ENCODE measurements at regions of chr9 and their contacts with region 1.

Region 1: GRCh38 chr9:73125651-73126050 is 26.0 kb upstream of the ANXA1 start:
- DNase-seq: no peak
- ATAC-seq: no peak
- H3K4me3 ChIP-seq: no peak overlapping the region
- H3K4me3 Mint-ChIP-seq: no peak overlapping the region
- H3K27ac ChIP-seq: no peak overlapping the region
- H3K27ac Mint-ChIP-seq: no peak overlapping the region
- H3K4me1 ChIP-seq: no peaks in the 10 kb centered on the region
- H3K4me1 Mint-ChIP-seq: peaks cover 24% of the 10 kb centered on the region
- H3K27me3 ChIP-seq: no peaks in the 10 kb centered on the region
- H3K27me3 Mint-ChIP-seq: no peaks in the 10 kb centered on the region
- CTCF ChIP-seq: no peak

Region 2: DNA sequence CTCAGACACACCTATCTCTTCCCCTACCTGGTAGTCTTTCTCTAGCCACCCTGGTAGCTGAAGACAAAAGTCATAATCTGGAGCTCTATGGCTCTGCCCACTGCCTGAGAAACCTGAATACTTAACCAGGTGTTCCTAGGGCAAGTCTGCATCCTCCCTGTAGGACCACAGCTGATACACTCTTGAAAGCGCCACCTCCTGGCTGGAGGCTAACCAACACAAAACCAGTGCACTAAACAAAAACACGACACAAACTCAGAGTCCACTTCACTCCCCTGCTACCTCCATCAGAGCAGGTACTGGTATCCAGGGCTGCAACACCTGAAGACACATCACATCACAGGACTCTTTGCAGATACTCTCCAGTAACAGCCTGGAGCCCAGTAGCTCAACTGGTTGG is 58.6 kb before region 1 on chr9:
- CTCF ChIA-PET with region 1: no interaction called
- POLR2A ChIA-PET with region 1: no interaction called
- intact Hi-C with region 1: loop called in 1 of 2 experiments (anchors 10 kb)
- DNase-seq: no peak
- ATAC-seq: no peak
- H3K4me3 ChIP-seq: no peak overlapping the region
- H3K4me3 Mint-ChIP-seq: no peak overlapping the region
- H3K27ac ChIP-seq: no peak overlapping the region
- H3K27ac Mint-ChIP-seq: no peak overlapping the region
- H3K4me1 ChIP-seq: no peaks in the 10 kb centered on the region
- H3K4me1 Mint-ChIP-seq: no peaks in the 10 kb centered on the region
- H3K27me3 ChIP-seq: no peaks in the 10 kb centered on the region
- H3K27me3 Mint-ChIP-seq: peaks cover 15% of the 10 kb centered on the region
- CTCF ChIP-seq: no peak

Region 3: DNA sequence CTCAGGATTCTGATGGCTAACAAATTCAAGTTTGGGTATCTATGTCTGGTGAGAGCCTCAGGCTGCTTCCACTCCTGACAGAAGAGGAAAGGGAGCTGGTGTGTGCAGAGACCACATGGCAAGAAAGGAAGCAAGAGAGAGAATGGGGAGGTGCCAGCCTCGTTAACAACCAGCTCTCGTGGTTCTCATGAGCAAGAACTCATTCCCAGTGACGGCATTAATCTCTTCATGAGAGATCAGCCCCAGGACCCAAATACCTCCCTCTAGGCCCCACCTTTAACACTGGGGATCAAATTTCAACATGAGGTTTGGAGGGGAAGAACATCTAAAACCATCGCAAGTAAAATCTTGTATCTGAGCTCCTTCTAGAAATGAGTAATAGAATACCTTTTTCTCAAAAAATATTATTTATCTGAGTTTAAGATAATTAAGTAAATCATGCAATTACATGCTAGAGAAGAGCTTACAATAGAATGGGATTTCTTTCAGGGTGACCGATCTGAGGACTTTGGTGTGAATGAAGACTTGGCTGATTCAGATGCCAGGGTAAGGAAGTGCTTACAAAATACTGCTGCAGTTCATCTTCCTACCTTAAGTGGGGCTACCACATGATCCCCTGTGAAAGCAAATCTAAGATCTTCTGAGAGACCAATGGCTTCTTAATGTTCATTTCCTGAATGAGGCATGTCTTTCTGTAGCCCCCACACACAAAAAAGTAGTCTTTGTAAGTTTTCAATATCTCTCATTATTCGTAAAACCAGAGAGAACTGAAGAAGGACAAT is 37.5 kb after region 1 on chr9:
- CTCF ChIA-PET with region 1: interaction called, 4 read pairs
- POLR2A ChIA-PET with region 1: no interaction called
- intact Hi-C with region 1: loop called (anchors 5 kb)
- DNase-seq: peak in 2 of 14 experiments; percentile 30 to 33
- ATAC-seq: peak; percentile 37
- H3K4me3 ChIP-seq: no peak overlapping the region
- H3K4me3 Mint-ChIP-seq: no peak overlapping the region
- H3K27ac ChIP-seq: no peak overlapping the region
- H3K27ac Mint-ChIP-seq: peak overlapping the region; percentile 74
- H3K4me1 ChIP-seq: peaks cover 7% of the 10 kb centered on the region
- H3K4me1 Mint-ChIP-seq: peaks cover 32% of the 10 kb centered on the region
- H3K27me3 ChIP-seq: no peaks in the 10 kb centered on the region
- H3K27me3 Mint-ChIP-seq: no peaks in the 10 kb centered on the region
- CTCF ChIP-seq: no peak

Region 4: GRCh38 chr9:73194284-73194683 is 68.6 kb after region 1 on chr9:
- CTCF ChIA-PET with region 1: no interaction called
- POLR2A ChIA-PET with region 1: no interaction called
- intact Hi-C with region 1: no loop called
- DNase-seq: no peak
- ATAC-seq: no peak
- H3K4me3 ChIP-seq: no peak overlapping the region
- H3K4me3 Mint-ChIP-seq: no peak overlapping the region
- H3K27ac ChIP-seq: no peak overlapping the region
- H3K27ac Mint-ChIP-seq: no peak overlapping the region
- H3K4me1 ChIP-seq: no peaks in the 10 kb centered on the region
- H3K4me1 Mint-ChIP-seq: no peaks in the 10 kb centered on the region
- H3K27me3 ChIP-seq: peaks cover 0 to 5% of the 10 kb centered on the region in 2 experiments
- H3K27me3 Mint-ChIP-seq: peaks cover 14% of the 10 kb centered on the region
- CTCF ChIP-seq: no peak

Region 5: GRCh38 chr9:73269430-73270101 is 143.9 kb after region 1 on chr9:
- CTCF ChIA-PET with region 1: no interaction called
- POLR2A ChIA-PET with region 1: no interaction called
- intact Hi-C with region 1: no loop called
- DNase-seq: no peak
- ATAC-seq: no peak
- H3K4me3 ChIP-seq: no peak overlapping the region
- H3K4me3 Mint-ChIP-seq: no peak overlapping the region
- H3K27ac ChIP-seq: no peak overlapping the region
- H3K27ac Mint-ChIP-seq: no peak overlapping the region
- H3K4me1 ChIP-seq: no peaks in the 10 kb centered on the region
- H3K4me1 Mint-ChIP-seq: no peaks in the 10 kb centered on the region
- H3K27me3 ChIP-seq: no peaks in the 10 kb centered on the region
- H3K27me3 Mint-ChIP-seq: no peaks in the 10 kb centered on the region
- CTCF ChIP-seq: no peak

Measured in CD4-positive, alpha-beta T cell (primary cell).